Activated CD4-positive, alpha-beta memory T cell treated with anti-CD3 and anti-CD28 coated beads for 36 hours (primary cell): ENCODE measurements at regions of chr17 and their contacts with region 1.

Region 1: DNA sequence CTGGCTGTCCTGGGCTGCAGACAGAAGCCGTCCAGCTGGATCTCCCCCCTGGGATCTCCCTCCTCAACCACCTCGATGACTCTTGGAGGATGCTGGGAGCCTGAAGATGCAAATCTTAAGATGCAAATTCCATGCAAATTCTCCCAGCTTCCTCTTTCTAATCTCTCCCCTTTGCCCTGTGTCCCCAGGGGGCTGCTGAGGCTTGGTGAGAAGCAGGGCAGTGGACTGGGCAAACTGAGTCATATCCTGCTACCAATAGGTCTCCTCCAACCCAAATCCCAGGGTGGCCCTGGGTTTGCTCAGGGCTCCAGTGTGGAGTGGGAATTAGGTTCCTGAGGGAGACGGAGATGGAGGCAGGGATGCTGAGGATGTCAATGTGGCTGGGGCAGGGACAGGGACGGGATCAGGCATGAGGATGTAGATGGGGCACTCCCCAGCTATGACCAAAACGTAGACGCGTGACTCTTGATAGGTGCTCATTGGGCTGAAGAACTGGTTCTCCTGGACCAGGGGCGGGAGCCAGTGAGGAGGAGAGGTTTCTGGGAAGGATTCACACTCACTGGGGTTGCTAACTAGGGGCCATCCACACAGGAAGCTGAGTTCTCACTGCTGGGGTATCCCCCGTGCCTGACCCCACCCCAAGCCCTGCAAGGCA is 3.6 kb upstream of the ALOX12B start:
- DNase-seq: no peak
- H3K4me3 Mint-ChIP-seq: no peak overlapping the region
- H3K27ac Mint-ChIP-seq: no peak overlapping the region
- H3K4me1 Mint-ChIP-seq: peaks cover 10% of the 10 kb centered on the region
- H3K27me3 Mint-ChIP-seq: peaks cover 24% of the 10 kb centered on the region

Region 2: GRCh38 chr17:8079291-8080207 is 11.6 kb before region 1 on chr17:
- CTCF ChIA-PET with region 1: interaction called, 169 read pairs
- POLR2A ChIA-PET with region 1: no interaction called
- intact Hi-C with region 1: no loop called
- DNase-seq: peak; percentile 89
- H3K4me3 Mint-ChIP-seq: peak overlapping the region; percentile 93
- H3K27ac Mint-ChIP-seq: peak overlapping the region; percentile 81
- H3K4me1 Mint-ChIP-seq: peaks cover 13% of the 10 kb centered on the region
- H3K27me3 Mint-ChIP-seq: peaks cover 10% of the 10 kb centered on the region

Region 3: GRCh38 chr17:8300627-8301242 is 209.6 kb after region 1 on chr17:
- CTCF ChIA-PET with region 1: interaction called, 12 read pairs
- POLR2A ChIA-PET with region 1: no interaction called
- intact Hi-C with region 1: no loop called
- DNase-seq: peak; percentile 68
- H3K4me3 Mint-ChIP-seq: no peak overlapping the region
- H3K27ac Mint-ChIP-seq: no peak overlapping the region
- H3K4me1 Mint-ChIP-seq: peaks cover 9% of the 10 kb centered on the region
- H3K27me3 Mint-ChIP-seq: no peaks in the 10 kb centered on the region